ENCODE measurements at regions of chr11 and their contacts with region 1.

Region 1: DNA sequence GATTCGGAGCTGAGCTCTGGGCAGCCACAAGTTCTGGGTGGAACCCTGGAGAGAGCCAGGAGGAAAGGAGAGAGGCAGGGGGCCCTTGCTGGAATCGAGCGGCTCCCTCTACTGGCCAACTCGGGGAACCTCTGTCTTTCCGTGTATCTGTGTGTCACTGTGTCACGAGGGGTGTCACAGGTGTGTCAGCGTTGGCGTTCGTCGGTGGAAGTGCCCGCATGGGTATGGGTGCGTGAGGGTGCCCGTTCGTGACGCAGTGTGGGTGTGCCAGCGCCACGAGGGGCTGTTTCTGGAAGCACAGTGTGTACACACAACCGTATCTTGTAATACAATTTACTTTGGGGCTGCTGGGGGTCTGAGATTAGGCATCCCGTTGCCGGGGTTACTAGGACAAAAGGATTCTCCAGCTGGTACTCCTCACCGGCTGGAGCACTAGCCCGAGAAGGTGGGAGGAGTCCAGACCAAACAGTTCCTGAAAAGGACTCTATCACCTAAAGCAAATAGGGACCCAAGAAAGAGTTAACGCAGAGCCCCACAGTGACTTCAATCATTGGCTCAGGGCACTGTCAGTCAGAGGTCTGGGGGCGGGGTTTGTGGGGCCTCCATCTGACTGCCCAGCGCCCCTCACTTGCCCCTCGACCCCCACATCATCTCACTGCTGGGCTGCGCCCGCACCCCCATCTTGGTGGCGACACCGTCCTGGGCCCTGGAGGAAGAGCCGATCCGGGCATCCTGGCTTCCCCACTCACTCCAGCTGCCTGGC is 2.6 kb upstream of the BCL9L start:
- DNase-seq: peak; percentile 93 to 97
- H3K4me3 ChIP-seq: peak overlapping the region; percentile 80 to 82
- H3K27ac ChIP-seq: peak overlapping the region; percentile 97 to 98
- H3K4me1 ChIP-seq: peaks cover 3 to 16% of the 10 kb centered on the region in 2 donors
- H3K27me3 ChIP-seq: no peaks in the 10 kb centered on the region
- CTCF ChIP-seq: peak; percentile 92 to 97 (median 94)

Region 2: GRCh38 chr11:118621071-118621783 is 307.1 kb before region 1 on chr11:
- intact Hi-C with region 1: loop called (anchors 5 kb)
- DNase-seq: peak in 1 of 2 donors; percentile 95
- H3K4me3 ChIP-seq: peak overlapping the region; percentile 73
- H3K27ac ChIP-seq: peak overlapping the region; percentile 95 to 99
- H3K4me1 ChIP-seq: peaks cover 31 to 67% of the 10 kb centered on the region in 2 donors
- H3K27me3 ChIP-seq: no peaks in the 10 kb centered on the region
- CTCF ChIP-seq: no peak

Region 3: GRCh38 chr11:118791111-118791965 is 137.0 kb before region 1 on chr11 and contains the start of gene DDX6:
- intact Hi-C with region 1: loop called (anchors 2 kb)
- DNase-seq: peak; percentile 59 to 96
- H3K4me3 ChIP-seq: peak within 1 kb of the TSS; percentile 73 to 92
- H3K27ac ChIP-seq: peak within 1 kb of the TSS; percentile 98 to 100
- H3K4me1 ChIP-seq: peaks cover under 1 to 12% of the 10 kb centered on the region in 2 donors
- H3K27me3 ChIP-seq: no peaks in the 10 kb centered on the region
- CTCF ChIP-seq: peak; percentile 41 to 56 (median 46)
- total RNA-seq, gene DDX6: 25.9 TPM

Region 4: GRCh38 chr11:118827118-118827517 is 101.2 kb before region 1 on chr11:
- intact Hi-C with region 1: no loop called
- DNase-seq: no peak
- H3K4me3 ChIP-seq: no peak overlapping the region
- H3K27ac ChIP-seq: no peak overlapping the region
- H3K4me1 ChIP-seq: no peaks in the 10 kb centered on the region
- H3K27me3 ChIP-seq: no peaks in the 10 kb centered on the region
- CTCF ChIP-seq: no peak

Region 5: GRCh38 chr11:118907051-118908042 is 20.9 kb before region 1 on chr11:
- intact Hi-C with region 1: loop called (anchors 1 kb)
- DNase-seq: peak in 1 of 2 donors; percentile 93
- H3K4me3 ChIP-seq: peak overlapping the region in 1 of 2 donors; percentile 9
- H3K27ac ChIP-seq: peak overlapping the region; percentile 73 to 97
- H3K4me1 ChIP-seq: peaks cover 14 to 54% of the 10 kb centered on the region in 2 donors
- H3K27me3 ChIP-seq: no peaks in the 10 kb centered on the region
- CTCF ChIP-seq: peak; percentile 85 to 97 (median 95)

Region 6: GRCh38 chr11:119315131-119316015 is 387.1 kb after region 1 on chr11:
- intact Hi-C with region 1: loop called (anchors 5 kb)
- DNase-seq: peak in 1 of 2 donors; percentile 82
- H3K4me3 ChIP-seq: peak overlapping the region; percentile 80 to 92
- H3K27ac ChIP-seq: peak overlapping the region; percentile 98 to 99
- H3K4me1 ChIP-seq: peaks cover 20 to 60% of the 10 kb centered on the region in 2 donors
- H3K27me3 ChIP-seq: no peaks in the 10 kb centered on the region
- CTCF ChIP-seq: peak; percentile 11 to 24 (median 22)